ENCODE measurements at regions of chr9 and their contacts with region 1.

Region 1: DNA sequence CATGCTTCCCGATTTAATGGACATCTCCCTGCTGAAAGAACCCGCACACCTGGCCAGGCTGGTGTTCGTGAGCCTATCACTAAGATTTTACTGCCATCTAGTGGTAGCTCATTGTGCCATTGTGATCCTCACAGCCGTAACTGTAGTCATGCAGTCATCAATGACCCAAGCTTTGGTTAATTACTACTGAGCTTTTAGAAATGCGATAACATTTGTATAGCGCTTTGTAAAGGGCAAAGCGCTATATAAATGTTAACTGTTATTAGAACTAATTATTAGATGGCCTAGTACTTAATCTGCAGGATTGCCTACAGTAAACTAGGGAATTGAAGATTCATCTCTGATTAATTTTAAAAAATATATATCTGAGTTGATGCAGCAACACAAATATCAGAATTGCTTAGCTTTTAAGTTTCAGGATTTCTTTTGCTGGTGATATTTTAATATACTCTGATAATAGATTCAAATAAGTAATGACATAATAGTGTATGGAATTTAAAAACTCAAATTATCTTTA is 90.2 kb downstream of the HACD4 start:
- DNase-seq: peak; percentile 60 to 63
- H3K4me3 ChIP-seq: no peak overlapping the region
- H3K27ac ChIP-seq: no peak overlapping the region
- H3K4me1 ChIP-seq: peaks cover 0 to 7% of the 10 kb centered on the region in 2 donors
- H3K27me3 ChIP-seq: no peaks in the 10 kb centered on the region
- CTCF ChIP-seq: peak in 5 of 6 experiments; percentile 39 to 84 (median 82)
- POLR2A ChIP-seq: no peak

Region 2: DNA sequence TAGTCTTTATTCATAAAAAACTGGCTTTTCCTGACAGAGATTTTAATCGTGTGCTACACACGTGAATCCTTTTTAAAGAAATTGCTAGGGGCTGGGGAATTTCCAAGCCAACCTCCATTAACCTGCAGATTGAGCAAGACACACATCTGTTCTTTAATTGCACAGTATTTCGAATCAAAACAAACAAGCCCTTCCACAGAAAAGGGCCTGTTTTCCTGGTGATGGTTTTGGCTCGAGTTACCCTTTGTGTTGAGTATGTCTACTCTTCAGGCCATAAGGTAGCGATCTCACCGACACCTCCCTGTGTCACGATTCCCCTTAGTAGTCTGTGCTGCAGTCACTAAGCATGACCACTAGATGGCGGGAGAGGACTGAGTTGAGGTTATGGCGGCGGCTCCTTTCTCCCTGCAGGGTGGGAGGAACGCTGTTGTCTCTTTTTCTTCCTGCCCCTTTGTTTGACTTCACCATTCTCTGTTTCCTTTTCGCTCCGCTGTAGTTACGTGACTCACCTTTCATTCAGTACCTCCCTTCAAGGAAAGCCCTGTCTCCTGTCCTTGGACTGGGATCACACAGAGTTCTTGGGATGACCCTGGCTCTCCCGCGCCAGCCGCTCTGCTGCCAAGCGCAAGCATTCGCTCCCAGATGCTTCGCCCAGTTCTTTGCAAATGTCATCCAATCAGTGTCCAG is 1015.3 kb before region 1 on chr9:
- intact Hi-C with region 1: loop called (anchors 10 kb)
- DNase-seq: peak; percentile 62 to 65
- H3K4me3 ChIP-seq: peak overlapping the region in 1 of 3 donors; percentile 4
- H3K27ac ChIP-seq: no peak overlapping the region
- H3K4me1 ChIP-seq: no peaks in the 10 kb centered on the region
- H3K27me3 ChIP-seq: no peaks in the 10 kb centered on the region
- CTCF ChIP-seq: peak; percentile 79 to 97 (median 94)
- POLR2A ChIP-seq: no peak

Region 3: GRCh38 chr9:20356403-20357035 is 584.7 kb before region 1 on chr9:
- intact Hi-C with region 1: loop called (anchors 10 kb)
- DNase-seq: peak; percentile 81 to 85
- H3K4me3 ChIP-seq: no peak overlapping the region
- H3K27ac ChIP-seq: peak overlapping the region; percentile 23 to 66 (median 43)
- H3K4me1 ChIP-seq: peaks cover 18 to 32% of the 10 kb centered on the region in 2 donors
- H3K27me3 ChIP-seq: no peaks in the 10 kb centered on the region
- CTCF ChIP-seq: peak in 5 of 6 experiments; percentile 42 to 94 (median 79)
- POLR2A ChIP-seq: no peak

Region 4: GRCh38 chr9:20622330-20623020 is 318.8 kb before region 1 on chr9 and contains the start of gene MLLT3:
- intact Hi-C with region 1: loop called (anchors 5 kb)
- DNase-seq: peak; percentile 98
- H3K4me3 ChIP-seq: peak within 1 kb of the TSS; percentile 85 to 98 (median 95)
- H3K27ac ChIP-seq: peak within 1 kb of the TSS; percentile 90 to 97 (median 95)
- H3K4me1 ChIP-seq: peaks cover 6 to 14% of the 10 kb centered on the region in 2 donors
- H3K27me3 ChIP-seq: no peaks in the 10 kb centered on the region
- CTCF ChIP-seq: no peak
- POLR2A ChIP-seq: peak in 1 of 2 donors; percentile 95
- total RNA-seq, gene MLLT3: 29.8 to 51.0 (median 47.1) TPM

Region 5: GRCh38 chr9:21110708-21111576 is 169.7 kb after region 1 on chr9:
- intact Hi-C with region 1: no loop called
- DNase-seq: no peak
- H3K4me3 ChIP-seq: no peak overlapping the region
- H3K27ac ChIP-seq: peak overlapping the region in 2 of 3 donors; percentile 65 to 80
- H3K4me1 ChIP-seq: peaks cover 25 to 26% of the 10 kb centered on the region in 2 donors
- H3K27me3 ChIP-seq: no peaks in the 10 kb centered on the region
- CTCF ChIP-seq: peak; percentile 65 to 94 (median 78)
- POLR2A ChIP-seq: no peak

Region 6: GRCh38 chr9:21244836-21245235 is 303.6 kb after region 1 on chr9:
- intact Hi-C with region 1: no loop called
- DNase-seq: no peak
- H3K4me3 ChIP-seq: no peak overlapping the region
- H3K27ac ChIP-seq: no peak overlapping the region
- H3K4me1 ChIP-seq: no peaks in the 10 kb centered on the region
- H3K27me3 ChIP-seq: no peaks in the 10 kb centered on the region
- CTCF ChIP-seq: no peak
- POLR2A ChIP-seq: no peak